ENCODE measurements at regions of chr2 and their contacts with region 1.

Region 1: DNA sequence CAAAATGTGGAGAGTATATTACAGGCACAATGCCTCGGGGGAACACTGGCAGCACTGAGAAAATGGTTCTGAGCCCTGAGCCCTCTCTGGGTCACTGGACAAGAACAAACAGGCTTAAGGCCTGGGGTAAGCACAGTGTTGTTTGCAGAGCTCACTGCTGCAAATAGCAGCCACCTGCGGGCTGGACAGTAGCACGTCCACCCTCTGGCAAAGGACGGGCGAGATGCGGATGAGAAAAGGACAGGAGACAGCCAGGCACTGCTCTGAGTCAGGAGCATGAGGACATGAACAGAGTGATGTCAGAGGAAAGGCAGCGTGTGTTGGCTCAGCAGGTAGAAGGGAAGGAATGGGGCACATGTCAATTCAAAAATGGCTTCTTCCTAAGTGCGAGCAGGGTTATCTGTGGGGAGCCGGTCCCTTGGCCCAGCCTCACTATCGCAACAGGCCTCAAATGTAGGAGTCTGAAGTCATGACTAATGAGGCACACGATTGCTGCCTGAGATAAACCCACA is 25.9 kb upstream of the NEB start:
- DNase-seq: peak; percentile 96 to 98
- ATAC-seq: peak; percentile 91 to 93
- H3K4me3 ChIP-seq: no peak overlapping the region
- H3K27ac ChIP-seq: peak overlapping the region; percentile 94 to 96 (median 94)
- H3K4me1 ChIP-seq: peaks cover 35 to 61% of the 10 kb centered on the region in 2 donors
- H3K27me3 ChIP-seq: no peaks in the 10 kb centered on the region
- CTCF ChIP-seq: peak in 1 of 5 experiments; percentile 9
- POLR2A ChIP-seq: peak; percentile 68 to 89

Region 2: DNA sequence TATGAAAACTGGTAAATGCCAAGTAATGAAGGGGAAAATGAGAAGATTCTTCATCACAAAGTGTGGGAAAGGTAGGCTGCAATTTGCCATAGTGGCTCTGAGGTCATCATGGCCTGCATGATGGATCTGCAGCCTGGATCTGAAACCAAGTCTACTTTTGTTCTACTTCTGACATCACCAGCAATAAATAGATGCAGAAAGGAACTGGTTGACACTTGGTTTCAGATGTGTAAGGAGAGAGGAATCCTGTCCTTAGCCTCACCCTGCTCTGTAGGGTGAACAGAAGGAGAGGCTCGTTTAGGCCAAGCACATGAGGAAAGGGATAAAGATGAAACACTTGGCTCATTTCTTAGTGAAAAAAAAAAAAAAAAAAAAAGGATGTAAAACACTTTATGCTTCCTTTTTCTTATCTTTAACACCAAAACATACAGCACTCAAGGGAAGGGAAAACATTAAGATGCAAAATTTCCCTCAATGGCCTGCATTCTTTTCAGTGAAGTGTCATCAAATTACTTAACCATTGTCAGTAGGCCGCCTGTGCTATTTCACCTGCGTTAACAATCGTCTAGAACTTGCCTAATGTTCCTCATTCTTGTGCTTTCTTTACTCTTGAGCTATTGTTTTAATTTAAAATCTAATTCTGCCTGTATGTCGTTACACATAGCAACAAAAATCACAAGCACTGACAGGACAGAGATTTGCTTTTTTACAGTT is 29.8 kb before region 1 on chr2:
- in situ Hi-C with region 1: no loop called
- intact Hi-C with region 1: loop called (anchors 1 kb)
- DNase-seq: peak; percentile 51 to 62
- ATAC-seq: peak; percentile 76 to 77
- H3K4me3 ChIP-seq: peak overlapping the region; percentile 3 to 63 (median 40)
- H3K27ac ChIP-seq: peak overlapping the region; percentile 81 to 93 (median 90)
- H3K4me1 ChIP-seq: peaks cover 71 to 75% of the 10 kb centered on the region in 2 donors
- H3K27me3 ChIP-seq: no peaks in the 10 kb centered on the region
- CTCF ChIP-seq: no peak
- POLR2A ChIP-seq: peak; percentile 14 to 73

Region 3: GRCh38 chr2:151828143-151828889 is 68.1 kb after region 1 on chr2 and contains the start of gene ARL5A:
- in situ Hi-C with region 1: no loop called
- intact Hi-C with region 1: no loop called
- DNase-seq: peak; percentile 93 to 95
- ATAC-seq: peak; percentile 88
- H3K4me3 ChIP-seq: peak within 1 kb of the TSS; percentile 87 to 94 (median 90)
- H3K27ac ChIP-seq: peak within 1 kb of the TSS; percentile 90 to 96 (median 95)
- H3K4me1 ChIP-seq: peaks cover 46 to 49% of the 10 kb centered on the region in 2 donors
- H3K27me3 ChIP-seq: no peaks in the 10 kb centered on the region
- CTCF ChIP-seq: peak in 1 of 5 experiments; percentile 5
- POLR2A ChIP-seq: peak; percentile 92 to 96
- total RNA-seq, gene ARL5A: 45.0 to 81.7 (median 60.6) TPM

Region 4: DNA sequence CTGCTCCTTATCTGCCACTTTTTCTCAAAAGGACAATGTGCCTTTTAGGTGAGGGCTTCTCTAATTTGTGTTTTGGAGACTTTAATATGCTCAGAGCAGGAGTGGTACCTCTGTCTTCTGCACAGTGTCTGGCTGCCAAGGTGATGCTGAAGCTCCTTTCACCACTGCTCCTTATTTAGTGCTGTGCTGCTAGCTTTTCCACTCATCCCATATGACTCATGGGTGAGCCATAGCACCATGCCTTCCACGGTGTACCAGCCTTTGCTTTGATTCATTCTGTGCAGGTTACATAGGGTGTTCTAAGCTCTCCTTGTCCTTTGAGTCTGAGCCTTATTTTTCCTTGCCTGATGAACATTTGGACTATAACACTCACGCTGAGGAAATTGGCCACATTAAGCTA is 1160.7 kb after region 1 on chr2:
- in situ Hi-C with region 1: no loop called
- intact Hi-C with region 1: no loop called
- DNase-seq: no peak
- ATAC-seq: no peak
- H3K4me3 ChIP-seq: no peak overlapping the region
- H3K27ac ChIP-seq: no peak overlapping the region
- H3K4me1 ChIP-seq: no peaks in the 10 kb centered on the region
- H3K27me3 ChIP-seq: no peaks in the 10 kb centered on the region
- CTCF ChIP-seq: no peak
- POLR2A ChIP-seq: no peak